ENCODE measurements at regions of chr4 and their contacts with region 1.

Region 1: GRCh38 chr4:42895452-42895851 is 2.9 kb downstream of the GRXCR1 start:
- DNase-seq: no peak
- ATAC-seq: no peak
- H3K4me3 ChIP-seq: no peak overlapping the region
- H3K27ac ChIP-seq: no peak overlapping the region
- H3K4me1 ChIP-seq: no peaks in the 10 kb centered on the region
- H3K27me3 ChIP-seq: no peaks in the 10 kb centered on the region
- CTCF ChIP-seq: no peak
- POLR2A ChIP-seq: no peak
- RAD21 ChIP-seq: no peak

Region 2: DNA sequence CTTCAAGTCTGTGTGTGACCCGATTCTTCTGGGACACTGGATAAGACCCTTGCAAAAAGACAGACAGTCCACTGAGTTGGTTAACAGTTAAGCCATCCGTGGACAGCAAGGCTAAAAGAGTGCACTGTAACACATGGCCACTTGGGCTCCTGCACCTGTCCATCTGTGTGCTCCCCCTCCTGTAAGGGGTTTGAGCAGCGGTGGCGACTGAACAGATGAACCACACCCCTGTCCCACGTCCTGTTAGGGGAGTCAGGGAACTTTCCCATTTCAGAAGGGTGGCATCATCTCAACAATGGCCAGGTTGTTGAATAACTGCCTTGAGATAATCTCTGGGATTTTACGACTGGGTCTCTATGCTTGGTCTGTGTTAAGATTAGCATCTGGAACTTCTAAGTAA is 175.6 kb after region 1 on chr4:
- CTCF ChIA-PET with region 1: no interaction called
- POLR2A ChIA-PET with region 1: no interaction called
- dilution Hi-C with region 1: no loop called
- in situ Hi-C with region 1: no loop called
- intact Hi-C with region 1: loop called (anchors 2 kb)
- DNase-seq: no peak
- ATAC-seq: no peak
- H3K4me3 ChIP-seq: no peak overlapping the region
- H3K27ac ChIP-seq: no peak overlapping the region
- H3K4me1 ChIP-seq: no peaks in the 10 kb centered on the region
- H3K27me3 ChIP-seq: no peaks in the 10 kb centered on the region
- CTCF ChIP-seq: no peak
- POLR2A ChIP-seq: no peak
- RAD21 ChIP-seq: no peak

Region 3: GRCh38 chr4:43496188-43496587 is 600.7 kb after region 1 on chr4:
- CTCF ChIA-PET with region 1: no interaction called
- POLR2A ChIA-PET with region 1: no interaction called
- dilution Hi-C with region 1: no loop called
- in situ Hi-C with region 1: no loop called
- intact Hi-C with region 1: no loop called
- DNase-seq: peak; percentile 4
- ATAC-seq: no peak
- H3K4me3 ChIP-seq: peak overlapping the region; percentile 24; the same call in 1 of the 2 replicates
- H3K27ac ChIP-seq: no peak overlapping the region
- H3K4me1 ChIP-seq: no peaks in the 10 kb centered on the region
- H3K27me3 ChIP-seq: no peaks in the 10 kb centered on the region
- CTCF ChIP-seq: no peak
- POLR2A ChIP-seq: no peak
- RAD21 ChIP-seq: no peak